A673 (cell line): ENCODE measurements at regions of chr1 and their contacts with region 1.

Region 1: GRCh38 chr1:153990468-153991150 is at the start of gene RPS27:
- DNase-seq: peak; percentile 98
- H3K4me3 ChIP-seq: peak within 1 kb of the TSS; percentile 81
- H3K27ac ChIP-seq: peak within 1 kb of the TSS; percentile 96
- H3K4me1 ChIP-seq: peaks cover 17% of the 10 kb centered on the region
- H3K27me3 ChIP-seq: no peaks in the 10 kb centered on the region
- CTCF ChIP-seq: no peak
- total RNA-seq, gene RPS27: 1,464 and 1,548 TPM in 2 replicates

Region 2: GRCh38 chr1:153510984-153511410 is 479.6 kb before region 1 on chr1:
- CTCF ChIA-PET with region 1: no interaction called
- POLR2A ChIA-PET with region 1: no interaction called
- intact Hi-C with region 1: loop called (anchors 10 kb)
- DNase-seq: peak; percentile 81
- H3K4me3 ChIP-seq: no peak overlapping the region
- H3K27ac ChIP-seq: no peak overlapping the region
- H3K4me1 ChIP-seq: no peaks in the 10 kb centered on the region
- H3K27me3 ChIP-seq: no peaks in the 10 kb centered on the region
- CTCF ChIP-seq: peak; percentile 95

Region 3: DNA sequence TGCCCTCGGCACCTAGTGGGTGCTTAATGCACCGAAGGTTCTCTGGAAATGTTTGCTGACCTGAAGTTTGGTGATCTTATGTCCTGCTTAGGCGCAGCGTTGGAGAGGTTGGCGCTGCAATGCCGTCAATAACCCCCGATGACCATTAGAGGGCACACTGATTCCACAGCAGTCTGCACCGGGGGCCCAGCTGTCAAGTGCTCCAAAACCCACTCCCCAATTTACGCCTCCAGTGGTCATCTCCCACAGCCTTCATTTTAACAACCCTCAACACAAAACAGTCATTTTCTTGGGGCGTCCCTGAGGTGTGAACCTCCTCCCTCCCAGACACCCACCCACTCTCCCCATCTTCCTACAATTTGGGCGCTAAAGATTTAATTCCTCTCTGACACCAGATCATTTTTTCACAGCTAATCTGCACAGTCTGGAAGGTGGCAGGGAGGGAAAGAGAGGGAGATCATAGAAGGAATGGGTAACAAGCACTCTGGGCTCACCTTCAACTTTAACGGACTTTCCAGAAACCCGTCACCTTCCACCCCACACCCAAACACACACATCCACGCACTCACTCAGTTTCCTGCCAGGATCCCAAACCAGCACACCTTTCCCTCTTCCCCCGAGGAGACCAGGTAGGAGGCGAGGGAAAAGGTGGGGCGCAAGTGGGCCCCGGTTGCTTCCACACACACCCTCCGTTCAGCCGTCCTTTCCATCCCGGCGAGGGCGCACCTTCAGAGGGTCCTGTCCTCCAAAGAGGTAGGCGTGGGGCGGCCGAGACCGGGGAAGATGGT is 312.7 kb before region 1 on chr1:
- CTCF ChIA-PET with region 1: interaction called, 5 read pairs
- POLR2A ChIA-PET with region 1: interaction called, 5 read pairs
- intact Hi-C with region 1: loop called (anchors 2 kb)
- DNase-seq: peak; percentile 64
- H3K4me3 ChIP-seq: peak overlapping the region; percentile 45
- H3K27ac ChIP-seq: no peak overlapping the region
- H3K4me1 ChIP-seq: peaks cover 26% of the 10 kb centered on the region
- H3K27me3 ChIP-seq: peaks cover 40% of the 10 kb centered on the region
- CTCF ChIP-seq: peak; percentile 96

Region 4: GRCh38 chr1:153796791-153797659 is 193.6 kb before region 1 on chr1:
- CTCF ChIA-PET with region 1: interaction called, 8 read pairs
- POLR2A ChIA-PET with region 1: interaction called, 3 read pairs
- intact Hi-C with region 1: loop called (anchors 1 kb)
- DNase-seq: peak; percentile 78
- H3K4me3 ChIP-seq: no peak overlapping the region
- H3K27ac ChIP-seq: no peak overlapping the region
- H3K4me1 ChIP-seq: no peaks in the 10 kb centered on the region
- H3K27me3 ChIP-seq: no peaks in the 10 kb centered on the region
- CTCF ChIP-seq: peak; percentile 87

Region 5: DNA sequence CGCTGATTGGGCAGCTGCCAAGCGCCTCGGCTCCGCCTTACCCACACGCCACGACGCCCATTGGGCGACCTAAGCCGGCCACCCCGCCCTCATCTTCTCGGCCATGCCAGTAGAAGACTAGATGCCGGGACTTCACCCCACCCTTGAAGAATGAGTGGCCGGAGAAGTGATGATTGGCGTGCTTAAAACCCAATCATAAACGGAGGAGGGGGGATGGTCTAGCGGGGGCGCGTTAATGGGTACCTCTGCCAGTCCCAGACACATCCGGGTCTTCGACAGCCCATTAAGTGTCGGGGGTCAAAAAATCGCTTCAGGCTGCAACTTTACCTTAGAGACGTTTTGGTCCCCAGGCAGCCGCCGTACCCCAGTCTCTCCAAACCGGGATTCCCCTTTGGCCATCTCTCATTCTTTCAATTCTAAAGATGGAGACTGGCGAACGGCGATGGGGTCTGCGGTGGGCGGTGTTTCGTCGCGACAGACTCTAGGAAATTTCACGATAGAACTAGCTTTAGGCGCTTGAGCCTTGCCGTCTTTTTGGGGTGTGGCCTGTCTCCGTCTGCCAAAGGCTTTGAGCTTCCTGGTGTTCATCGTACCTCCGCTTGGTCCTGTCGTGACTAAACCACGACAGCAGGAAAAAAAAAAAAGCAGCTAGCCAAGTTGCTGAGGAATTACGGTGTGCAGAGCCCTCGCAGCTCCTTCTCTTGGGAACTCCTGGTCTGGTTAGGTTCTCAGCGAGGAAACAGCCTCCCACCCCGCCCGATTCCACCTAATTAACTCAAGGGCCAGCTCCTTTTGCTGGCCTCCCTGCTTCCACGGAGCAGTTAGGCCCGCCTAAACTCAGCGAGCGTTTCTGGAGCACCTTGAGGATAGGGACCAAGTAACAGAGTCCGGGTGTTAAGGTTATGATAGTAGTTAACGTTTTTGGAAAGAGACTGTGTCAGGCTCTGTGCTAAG is 67.4 kb before region 1 on chr1 and contains the start of gene GATAD2B:
- CTCF ChIA-PET with region 1: no interaction called
- POLR2A ChIA-PET with region 1: no interaction called
- intact Hi-C with region 1: loop called (anchors 2 kb)
- DNase-seq: peak; percentile 100
- H3K4me3 ChIP-seq: peak within 1 kb of the TSS; percentile 75
- H3K27ac ChIP-seq: peak within 1 kb of the TSS; percentile 77
- H3K4me1 ChIP-seq: peaks cover 31% of the 10 kb centered on the region
- H3K27me3 ChIP-seq: no peaks in the 10 kb centered on the region
- CTCF ChIP-seq: no peak
- total RNA-seq, gene GATAD2B: 58.8 and 67.3 TPM in 2 replicates